ENCODE measurements at regions of chr21 and their contacts with region 1.

Region 1: DNA sequence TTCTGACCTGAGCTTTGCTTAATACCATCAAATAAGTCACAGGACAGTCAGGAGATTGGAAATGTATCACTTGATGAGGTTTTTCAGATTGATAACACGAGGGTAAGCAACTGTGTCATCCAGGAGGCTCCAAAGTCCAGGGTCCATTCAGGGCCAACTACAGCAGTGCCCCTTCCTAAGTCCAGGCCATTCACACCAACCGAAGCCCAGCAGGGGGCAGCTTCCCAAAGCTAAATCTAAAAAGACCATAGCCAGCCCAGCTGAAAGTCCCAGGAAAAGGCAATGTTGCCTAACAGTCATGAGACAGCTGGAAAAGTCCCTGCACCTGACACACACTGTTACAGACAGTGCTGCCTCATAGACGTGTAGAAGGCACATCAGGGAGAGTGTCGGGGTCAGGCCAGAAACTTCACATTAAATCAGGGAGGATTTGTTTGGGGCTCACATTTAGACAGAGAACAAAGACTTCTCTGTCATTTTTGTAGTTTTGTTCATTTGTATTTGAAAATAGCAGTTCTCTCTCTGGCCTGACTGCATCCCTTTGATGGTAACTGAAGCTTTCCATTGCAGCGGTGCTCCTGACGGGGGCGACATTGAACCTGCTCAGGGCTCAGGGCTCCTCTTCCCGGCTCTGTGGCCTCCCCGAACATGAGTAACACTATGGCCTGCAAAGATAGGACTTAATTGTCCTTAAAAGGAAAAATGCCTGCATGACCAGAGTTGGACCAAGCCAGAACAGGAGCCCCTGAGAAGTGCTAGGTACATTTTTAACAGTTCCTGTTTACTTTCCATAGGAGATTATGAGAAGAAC is 200.4 kb downstream of the NRIP1 start:
- DNase-seq: peak; percentile 81
- H3K4me3 ChIP-seq: no peak overlapping the region
- H3K27ac ChIP-seq: no peak overlapping the region
- H3K4me1 ChIP-seq: peaks cover 17% of the 10 kb centered on the region
- H3K27me3 ChIP-seq: no peaks in the 10 kb centered on the region
- CTCF ChIP-seq: peak; percentile 61 to 74

Region 2: GRCh38 chr21:14259747-14260146 is 604.7 kb before region 1 on chr21:
- CTCF ChIA-PET with region 1: no interaction called
- dilution Hi-C with region 1: no loop called
- in situ Hi-C with region 1: no loop called
- intact Hi-C with region 1: loop called (anchors 5 kb)
- DNase-seq: peak; percentile 43
- H3K4me3 ChIP-seq: no peak overlapping the region
- H3K27ac ChIP-seq: no peak overlapping the region
- H3K4me1 ChIP-seq: no peaks in the 10 kb centered on the region
- H3K27me3 ChIP-seq: no peaks in the 10 kb centered on the region
- CTCF ChIP-seq: peak; percentile 38 to 59

Region 3: DNA sequence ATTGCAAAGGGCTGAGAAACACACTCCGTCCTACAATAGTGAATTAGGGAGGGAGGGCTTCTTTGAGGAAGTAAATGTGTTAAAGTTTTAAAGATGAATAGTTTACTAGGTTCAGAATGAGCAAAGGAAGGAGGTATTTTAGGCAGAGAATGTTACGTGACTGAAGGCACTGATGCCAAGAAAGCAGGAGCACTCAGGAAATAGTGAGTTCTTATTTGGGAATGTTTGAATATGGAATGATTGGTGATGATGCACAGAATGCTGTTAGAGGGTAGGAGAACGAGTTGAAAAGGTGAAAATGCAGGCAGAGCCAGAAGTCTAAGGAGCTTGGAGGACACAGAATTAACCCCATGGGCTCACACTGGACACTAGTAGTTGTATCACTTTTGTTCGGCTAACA is 92.4 kb after region 1 on chr21:
- CTCF ChIA-PET with region 1: no interaction called
- dilution Hi-C with region 1: no loop called
- in situ Hi-C with region 1: no loop called
- intact Hi-C with region 1: loop called (anchors 5 kb)
- DNase-seq: no peak
- H3K4me3 ChIP-seq: no peak overlapping the region
- H3K27ac ChIP-seq: no peak overlapping the region
- H3K4me1 ChIP-seq: peaks cover 5% of the 10 kb centered on the region
- H3K27me3 ChIP-seq: no peaks in the 10 kb centered on the region
- CTCF ChIP-seq: no peak

Region 4: DNA sequence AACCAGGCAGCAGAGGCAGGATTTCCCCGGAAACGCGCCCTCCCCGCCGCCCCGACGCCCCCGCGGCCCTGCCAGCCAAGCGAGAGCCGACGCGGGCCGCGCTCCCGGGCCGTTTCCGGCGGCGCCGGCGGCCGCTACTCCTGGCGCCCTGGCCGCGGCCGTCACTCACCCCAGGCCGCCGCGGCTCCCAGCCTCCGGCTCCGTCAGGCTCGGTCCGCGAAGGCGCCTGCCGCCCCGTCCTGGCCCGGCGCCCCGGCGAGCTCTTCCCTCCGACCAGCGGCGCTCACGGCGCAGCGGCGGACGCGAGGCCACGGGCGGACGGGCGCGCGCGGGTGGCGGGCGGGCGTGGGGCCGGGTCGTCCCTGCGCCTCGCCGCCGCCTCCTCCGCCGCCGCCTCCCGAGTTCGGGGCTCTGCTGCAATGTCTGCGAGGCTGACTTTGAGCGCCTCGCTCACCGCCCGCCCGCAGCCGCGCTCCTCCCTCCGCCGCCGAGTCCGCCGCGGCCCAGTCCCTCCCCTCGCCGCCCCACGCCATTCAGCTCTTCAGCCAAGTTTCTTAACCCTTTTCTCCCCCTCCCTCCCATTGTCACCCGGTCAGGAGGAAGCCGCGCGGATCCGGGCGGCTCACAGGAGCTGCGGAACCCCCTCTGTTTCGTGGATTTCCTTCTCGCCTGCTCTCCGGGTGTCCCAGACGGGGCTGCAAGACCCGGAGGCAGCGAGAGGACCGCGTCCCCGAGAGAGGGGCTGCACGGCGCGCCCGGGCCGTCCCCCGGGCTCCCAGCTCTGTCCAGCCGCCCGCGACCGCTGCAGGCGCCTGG is 200.4 kb after region 1 on chr21 and contains the start of gene NRIP1:
- CTCF ChIA-PET with region 1: no interaction called
- dilution Hi-C with region 1: no loop called
- in situ Hi-C with region 1: no loop called
- intact Hi-C with region 1: loop called (anchors 1 kb)
- DNase-seq: peak; percentile 90
- H3K4me3 ChIP-seq: peak within 1 kb of the TSS; percentile 80 to 87 (median 82)
- H3K27ac ChIP-seq: peak within 1 kb of the TSS; percentile 92
- H3K4me1 ChIP-seq: peaks cover 23% of the 10 kb centered on the region
- H3K27me3 ChIP-seq: no peaks in the 10 kb centered on the region
- CTCF ChIP-seq: no peak
- total RNA-seq, gene NRIP1: 40.8 to 73.7 TPM

Region 5: DNA sequence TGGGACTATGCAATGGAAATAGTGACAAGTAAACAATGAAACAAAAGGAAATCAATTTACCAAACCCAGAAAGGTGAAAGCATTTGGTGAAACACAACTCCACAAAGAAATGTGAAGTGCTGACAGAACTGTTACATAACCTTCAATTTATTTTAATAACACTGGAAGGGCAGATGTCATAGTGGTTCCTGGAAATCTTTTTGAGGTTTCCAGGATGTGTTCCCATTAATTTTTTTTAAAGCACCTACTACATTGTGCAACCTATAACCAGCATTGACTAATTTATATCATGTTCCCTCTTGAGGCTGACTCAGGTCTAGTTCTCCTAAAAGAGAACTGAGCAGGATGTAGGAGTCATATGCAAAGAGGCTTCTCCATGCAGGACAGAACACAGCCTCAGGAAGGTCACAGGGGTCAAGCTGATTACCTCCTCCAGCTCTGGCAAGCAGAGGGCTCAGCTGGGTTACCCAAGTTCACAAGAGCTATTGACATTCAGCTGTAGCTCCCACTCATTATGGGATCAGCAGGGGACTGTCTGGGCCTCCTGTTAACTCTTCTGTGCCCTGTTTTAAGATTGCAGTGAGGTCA is 357.5 kb after region 1 on chr21:
- CTCF ChIA-PET with region 1: no interaction called
- dilution Hi-C with region 1: no loop called
- in situ Hi-C with region 1: no loop called
- intact Hi-C with region 1: loop called (anchors 1 kb)
- DNase-seq: peak; percentile 96
- H3K4me3 ChIP-seq: no peak overlapping the region
- H3K27ac ChIP-seq: peak overlapping the region; percentile 87
- H3K4me1 ChIP-seq: peaks cover 38% of the 10 kb centered on the region
- H3K27me3 ChIP-seq: no peaks in the 10 kb centered on the region
- CTCF ChIP-seq: peak in 1 of 2 donors; percentile 8

Region 6: DNA sequence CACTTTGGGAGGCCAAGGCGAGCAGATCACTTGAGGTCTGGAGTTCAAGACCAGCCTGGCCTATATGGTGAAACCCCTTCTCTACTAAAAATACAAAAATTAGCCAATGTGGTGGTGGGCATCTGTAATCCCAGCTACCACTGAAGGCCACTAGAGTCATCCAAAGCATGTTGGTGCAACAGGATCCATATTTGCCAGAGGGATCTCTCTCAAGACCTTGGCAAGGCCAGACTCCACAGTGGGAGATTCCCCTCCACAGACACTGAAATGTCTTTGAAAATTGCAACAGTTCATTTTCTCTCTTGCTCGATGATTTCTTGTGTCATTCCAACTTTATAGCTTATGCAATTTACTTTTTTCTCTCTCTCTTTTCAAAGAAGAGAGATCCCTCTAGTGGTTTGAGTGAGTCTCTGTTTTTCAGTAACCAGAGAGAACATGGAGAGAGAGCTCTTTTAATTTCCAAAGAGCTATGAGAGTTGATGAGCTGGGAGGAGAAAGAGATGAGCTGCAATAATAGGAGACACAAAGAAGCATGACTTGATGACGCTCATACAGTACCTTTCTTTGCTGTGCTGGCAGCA is 688.6 kb after region 1 on chr21:
- CTCF ChIA-PET with region 1: no interaction called
- dilution Hi-C with region 1: no loop called
- in situ Hi-C with region 1: no loop called
- intact Hi-C with region 1: loop called (anchors 2 kb)
- DNase-seq: peak; percentile 38
- H3K4me3 ChIP-seq: no peak overlapping the region
- H3K27ac ChIP-seq: no peak overlapping the region
- H3K4me1 ChIP-seq: no peaks in the 10 kb centered on the region
- H3K27me3 ChIP-seq: no peaks in the 10 kb centered on the region
- CTCF ChIP-seq: peak; percentile 56 to 72